H1 (cell line): ENCODE measurements at regions of chr6 and their contacts with region 1.

Region 1: DNA sequence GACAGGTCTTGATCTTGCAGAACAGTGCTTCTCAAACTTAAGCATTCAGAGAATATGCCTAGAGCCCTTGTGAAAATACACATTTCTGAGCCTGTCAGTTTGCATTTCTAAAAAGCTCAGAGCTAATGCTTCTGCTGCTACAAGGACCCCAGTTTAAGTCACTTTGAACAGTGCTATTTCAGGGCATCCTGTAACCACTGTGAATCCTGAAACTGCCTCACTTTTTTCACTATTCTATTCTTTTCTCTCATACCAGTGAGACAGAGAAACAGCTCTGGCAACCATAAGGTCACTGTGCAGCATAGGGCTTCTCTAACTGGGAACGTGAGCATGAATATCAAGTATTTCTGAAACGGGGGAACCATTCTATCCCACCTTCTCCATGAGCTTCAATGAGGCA is 51.2 kb downstream of the LGSN start:
- DNase-seq: no peak
- H3K4me3 ChIP-seq: no peak overlapping the region
- H3K27ac ChIP-seq: no peak overlapping the region
- H3K4me1 ChIP-seq: peaks cover 0 to 3% (median 0%) of the 10 kb centered on the region in 4 experiments; a peak in 1 of 7 replicates
- H3K27me3 ChIP-seq: no peaks in the 10 kb centered on the region
- CTCF ChIP-seq: no peak
- EP300 ChIP-seq: no peak
- POLR2A ChIP-seq: no peak
- RAD21 ChIP-seq: no peak

Region 2: DNA sequence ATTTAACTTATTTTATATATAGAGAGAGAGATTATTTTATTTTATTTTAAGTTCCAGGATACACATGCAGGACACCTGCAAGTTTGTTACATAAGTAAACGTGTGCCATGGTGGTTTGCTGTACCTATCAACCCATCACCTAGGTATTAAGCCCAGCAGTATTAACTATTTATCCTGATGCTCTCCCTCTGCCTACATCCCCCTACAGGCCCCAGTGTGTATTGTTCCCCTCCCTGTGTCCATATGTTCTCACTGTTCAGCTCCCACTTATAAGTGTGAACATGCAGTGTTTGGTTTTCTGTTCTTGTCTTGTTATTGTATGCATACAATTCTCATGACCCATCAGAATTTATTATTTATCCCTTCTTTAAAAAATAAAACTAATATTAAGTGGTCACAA is 22.7 kb before region 1 on chr6:
- CTCF ChIA-PET with region 1: interaction called, 11 read pairs
- POLR2A ChIA-PET with region 1: no interaction called
- DNase-seq: no peak
- H3K4me3 ChIP-seq: no peak overlapping the region
- H3K27ac ChIP-seq: no peak overlapping the region
- H3K4me1 ChIP-seq: no peaks in the 10 kb centered on the region
- H3K27me3 ChIP-seq: no peaks in the 10 kb centered on the region
- CTCF ChIP-seq: peak in 2 of 3 experiments; percentile 14 to 46; a peak in 2 of 4 replicates
- EP300 ChIP-seq: no peak
- POLR2A ChIP-seq: no peak
- RAD21 ChIP-seq: peak; percentile 33 to 39; a peak in 3 of 4 replicates